ENCODE measurements at regions of chr1 and their contacts with region 1.

Region 1: DNA sequence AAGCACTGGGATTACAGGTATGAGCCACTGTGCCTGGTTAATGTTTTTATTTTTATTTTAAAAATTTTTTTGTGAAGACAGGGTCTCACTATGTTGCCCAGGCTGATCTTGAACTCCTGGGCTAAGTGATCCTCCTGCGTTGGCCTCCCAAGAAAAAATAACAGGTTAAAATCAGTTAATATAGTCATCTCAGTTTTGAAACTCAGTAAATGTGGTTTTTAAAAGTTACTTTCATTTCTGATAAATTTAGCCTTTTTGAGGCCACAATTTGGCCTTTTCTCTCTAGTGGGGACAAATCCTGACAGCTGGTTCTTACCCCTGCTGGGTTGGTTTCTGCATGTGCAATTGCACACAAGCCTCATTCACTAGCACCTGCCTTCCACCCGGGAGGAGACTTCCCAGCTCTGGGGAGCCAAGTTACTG is 13.3 kb downstream of the PMF1 start:
- DNase-seq: no peak
- ATAC-seq: no peak
- H3K4me3 Mint-ChIP-seq: peak overlapping the region in 1 of 10 donors; percentile 29
- H3K27ac Mint-ChIP-seq: peak overlapping the region in 1 of 10 donors; percentile 23
- H3K4me1 Mint-ChIP-seq: peaks cover 17 to 23% (median 20%) of the 10 kb centered on the region in 4 donors
- H3K27me3 Mint-ChIP-seq: no peaks in the 10 kb centered on the region

Region 2: DNA sequence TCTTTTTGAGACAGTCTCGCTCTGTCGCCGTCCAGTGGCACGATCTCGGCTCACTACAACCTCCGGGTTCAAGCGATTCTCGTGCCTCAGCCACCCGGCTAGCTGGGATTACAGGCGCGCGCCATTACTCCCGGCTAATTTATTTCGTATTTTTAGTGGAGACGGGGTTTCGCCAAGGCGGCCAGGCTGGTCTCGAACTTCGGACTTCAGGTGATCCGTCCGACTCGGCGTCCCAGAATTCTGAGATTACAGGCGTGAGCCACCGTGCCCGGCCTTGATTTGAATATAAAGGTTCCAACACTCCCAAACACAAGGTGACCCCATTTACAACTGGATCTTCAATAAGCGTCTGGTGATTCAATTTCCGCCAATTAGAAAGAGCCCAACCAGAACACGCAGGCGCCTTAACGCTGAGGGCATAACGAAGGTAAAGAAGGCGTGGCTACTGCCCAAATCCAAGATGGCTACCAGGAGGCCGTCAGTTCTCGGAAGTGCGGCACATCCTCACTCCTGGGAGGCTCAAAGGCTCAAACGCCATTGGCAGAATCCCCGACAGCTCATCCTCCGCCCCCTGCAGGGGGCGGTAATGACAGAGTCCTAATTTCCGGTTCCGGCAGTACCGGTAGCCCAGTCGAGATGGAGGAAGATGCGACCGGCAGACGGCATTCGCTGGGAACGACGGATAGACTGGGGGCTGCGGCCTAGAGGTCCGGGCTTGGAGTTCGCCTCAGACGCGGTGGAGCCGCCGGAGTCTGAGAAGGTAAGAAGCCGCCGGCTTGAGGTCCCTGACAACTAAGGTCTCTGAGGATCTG is 32.4 kb before region 1 on chr1 and contains the start of gene SLC25A44:
- POLR2A ChIA-PET with region 1: interaction called, 11 read pairs
- DNase-seq: peak; percentile 88 to 98 (median 97)
- ATAC-seq: peak; percentile 98
- H3K4me3 Mint-ChIP-seq: peak within 1 kb of the TSS; percentile 94 to 100 (median 96)
- H3K27ac Mint-ChIP-seq: peak within 1 kb of the TSS; percentile 90 to 99 (median 95)
- H3K4me1 Mint-ChIP-seq: peaks cover 29 to 55% (median 44%) of the 10 kb centered on the region in 4 donors
- H3K27me3 Mint-ChIP-seq: no peaks in the 10 kb centered on the region
- polyA plus RNA-seq, gene SLC25A44: 6.0 to 16.4 (median 9.7) TPM

Region 3: GRCh38 chr1:156204686-156205085 is 21.4 kb before region 1 on chr1:
- POLR2A ChIA-PET with region 1: no interaction called
- DNase-seq: no peak
- ATAC-seq: no peak
- H3K4me3 Mint-ChIP-seq: no peak overlapping the region
- H3K27ac Mint-ChIP-seq: no peak overlapping the region
- H3K4me1 Mint-ChIP-seq: peaks cover 14 to 17% (median 15%) of the 10 kb centered on the region in 4 donors
- H3K27me3 Mint-ChIP-seq: no peaks in the 10 kb centered on the region

Measured in naive thymus-derived CD8-positive, alpha-beta T cell (primary cell).